ENCODE measurements at regions of chr14 and their contacts with region 1.

Region 1: DNA sequence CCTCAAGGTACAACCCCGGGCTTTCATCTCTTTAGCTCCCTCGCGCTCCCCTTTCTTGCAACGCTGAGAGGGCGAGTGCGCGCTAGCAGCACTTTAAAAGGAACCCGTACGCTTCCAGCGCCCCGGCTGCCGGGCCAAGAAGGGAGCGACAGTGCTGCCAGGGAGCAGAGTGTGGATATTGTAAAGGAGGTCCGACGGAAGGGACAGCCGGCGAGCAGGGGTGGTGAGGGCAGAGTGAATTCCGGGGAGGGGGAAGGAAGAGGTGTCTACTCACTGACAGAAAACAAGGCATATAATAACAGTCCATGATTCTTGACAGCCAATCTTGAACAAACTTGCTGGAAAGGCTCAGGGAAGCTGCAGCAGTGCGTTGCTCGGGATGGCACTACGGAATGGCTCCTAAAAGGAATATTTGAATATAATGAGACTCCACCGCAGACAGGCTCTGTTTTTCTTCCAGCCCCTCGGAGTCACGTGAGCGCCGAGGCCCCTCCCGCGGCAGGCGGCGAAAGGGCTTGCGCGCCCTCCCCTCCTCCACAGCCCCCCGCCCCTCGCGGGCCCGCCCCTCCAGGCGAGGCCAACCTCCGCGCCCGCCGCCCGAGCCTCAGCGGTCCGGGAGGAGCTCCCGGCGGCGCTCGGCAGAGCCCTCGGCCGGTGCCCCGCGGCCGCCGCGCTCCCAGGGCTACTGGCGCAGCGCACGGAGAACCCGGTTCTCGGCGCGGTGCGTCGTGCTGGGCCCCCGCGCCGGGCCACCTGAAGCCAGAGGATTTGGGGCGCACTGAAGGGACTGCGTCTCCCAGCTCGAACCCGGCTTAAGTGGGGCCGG is 3.4 kb downstream of the BMP4 start:
- DNase-seq: peak in 1 of 2 donors; percentile 90
- H3K4me3 ChIP-seq: peak overlapping the region; percentile 65 to 72
- H3K27ac ChIP-seq: peak overlapping the region; percentile 82 to 85
- H3K4me1 ChIP-seq: peaks cover 0 to 9% of the 10 kb centered on the region in 2 donors
- H3K27me3 ChIP-seq: no peaks in the 10 kb centered on the region
- CTCF ChIP-seq: no peak

Region 2: DNA sequence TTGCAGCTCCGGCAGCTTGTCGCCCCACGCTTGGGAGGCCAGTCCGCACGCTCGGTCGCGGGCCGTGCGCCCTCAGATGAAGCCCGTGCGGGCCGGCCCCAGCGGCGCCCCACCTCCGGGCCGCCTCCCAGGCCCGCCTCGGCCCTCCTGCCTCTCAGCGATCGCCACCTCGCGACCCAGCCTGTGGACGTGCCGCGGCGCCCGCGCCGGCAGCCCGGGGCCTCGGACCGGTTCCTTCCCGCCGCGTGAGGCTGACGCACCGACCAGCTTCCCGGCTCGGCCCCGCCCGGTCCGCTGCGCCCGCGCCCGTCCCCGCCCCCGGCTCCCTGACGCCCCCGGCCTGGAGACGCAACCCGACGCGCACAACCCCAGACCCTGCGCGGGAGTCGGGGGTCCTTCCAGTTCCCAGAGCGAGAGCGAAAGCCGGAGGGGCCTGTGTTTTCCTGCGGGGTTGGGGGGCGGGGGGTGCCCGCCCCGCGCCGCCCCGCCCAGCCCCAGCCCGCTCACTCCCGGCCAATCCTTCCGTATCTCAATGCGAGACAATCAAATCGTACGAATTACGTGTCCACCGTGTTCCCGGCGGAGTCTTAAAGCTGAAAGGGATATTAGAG is 1257.6 kb before region 1 on chr14 and contains the start of gene ERO1A:
- intact Hi-C with region 1: loop called (anchors 10 kb)
- DNase-seq: peak; percentile 44 to 91
- H3K4me3 ChIP-seq: peak within 1 kb of the TSS; percentile 96 to 98
- H3K27ac ChIP-seq: peak within 1 kb of the TSS; percentile 97 to 99
- H3K4me1 ChIP-seq: peaks cover 3 to 4% of the 10 kb centered on the region in 2 donors
- H3K27me3 ChIP-seq: no peaks in the 10 kb centered on the region
- CTCF ChIP-seq: no peak
- total RNA-seq, gene ERO1A: 25.9 TPM

Region 3: GRCh38 chr14:52950898-52951689 is 1002.1 kb before region 1 on chr14 and contains the start of gene FERMT2:
- intact Hi-C with region 1: loop called (anchors 10 kb)
- DNase-seq: peak; percentile 36 to 92
- H3K4me3 ChIP-seq: peak within 1 kb of the TSS; percentile 87 to 100
- H3K27ac ChIP-seq: peak within 1 kb of the TSS; percentile 98
- H3K4me1 ChIP-seq: peaks cover 5 to 31% of the 10 kb centered on the region in 2 donors
- H3K27me3 ChIP-seq: no peaks in the 10 kb centered on the region
- CTCF ChIP-seq: peak in 1 of 3 experiments; percentile 26
- total RNA-seq, gene FERMT2: 101 TPM

Region 4: DNA sequence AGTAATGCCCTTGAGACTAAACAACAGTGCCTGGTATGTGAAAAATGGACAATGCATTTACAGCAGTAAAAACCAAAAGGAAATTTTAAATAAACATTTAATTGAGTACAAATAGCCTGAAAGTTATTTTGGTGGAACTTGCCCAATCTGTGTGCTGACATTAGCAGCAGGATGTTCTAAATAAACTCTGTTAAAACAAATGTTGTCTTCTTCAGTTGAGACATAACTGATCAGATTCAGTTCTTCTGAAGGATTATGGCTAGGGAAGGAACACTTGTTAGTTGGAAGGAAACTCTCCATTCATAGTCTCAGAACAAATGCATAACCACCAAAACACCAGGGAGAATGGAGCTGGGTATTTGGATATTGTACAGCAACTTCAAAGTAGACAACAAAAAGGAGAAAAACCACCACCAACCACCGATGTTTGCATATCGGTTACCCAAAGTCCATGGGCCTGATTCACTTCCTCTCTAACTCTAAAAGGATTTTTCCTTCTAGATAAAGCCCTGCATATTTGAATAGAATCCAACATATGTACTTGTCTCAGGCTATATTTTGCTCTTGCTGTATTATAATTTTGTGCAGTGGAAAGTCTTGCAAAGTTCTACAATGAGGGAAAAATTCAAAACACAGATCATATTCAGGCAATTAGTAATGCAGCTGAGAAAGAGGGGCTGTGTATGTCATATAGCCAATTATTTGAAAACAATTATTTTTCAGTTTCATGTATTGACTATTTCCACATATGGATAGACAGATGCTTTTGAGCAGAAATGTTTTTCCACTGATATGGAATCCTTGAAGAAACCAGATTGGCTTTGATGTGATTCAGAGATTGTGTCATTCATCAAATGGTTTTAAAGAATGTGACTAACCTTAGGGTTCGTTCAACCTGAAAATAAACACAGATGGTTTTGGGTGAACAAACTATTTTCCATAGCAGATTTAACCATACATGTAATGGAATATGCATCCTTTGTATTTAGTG is 155.6 kb after region 1 on chr14:
- intact Hi-C with region 1: loop called (anchors 5 kb)
- DNase-seq: no peak
- H3K4me3 ChIP-seq: no peak overlapping the region
- H3K27ac ChIP-seq: peak overlapping the region; percentile 39 to 68
- H3K4me1 ChIP-seq: peaks cover 8 to 27% of the 10 kb centered on the region in 2 donors
- H3K27me3 ChIP-seq: no peaks in the 10 kb centered on the region
- CTCF ChIP-seq: no peak

Region 5: DNA sequence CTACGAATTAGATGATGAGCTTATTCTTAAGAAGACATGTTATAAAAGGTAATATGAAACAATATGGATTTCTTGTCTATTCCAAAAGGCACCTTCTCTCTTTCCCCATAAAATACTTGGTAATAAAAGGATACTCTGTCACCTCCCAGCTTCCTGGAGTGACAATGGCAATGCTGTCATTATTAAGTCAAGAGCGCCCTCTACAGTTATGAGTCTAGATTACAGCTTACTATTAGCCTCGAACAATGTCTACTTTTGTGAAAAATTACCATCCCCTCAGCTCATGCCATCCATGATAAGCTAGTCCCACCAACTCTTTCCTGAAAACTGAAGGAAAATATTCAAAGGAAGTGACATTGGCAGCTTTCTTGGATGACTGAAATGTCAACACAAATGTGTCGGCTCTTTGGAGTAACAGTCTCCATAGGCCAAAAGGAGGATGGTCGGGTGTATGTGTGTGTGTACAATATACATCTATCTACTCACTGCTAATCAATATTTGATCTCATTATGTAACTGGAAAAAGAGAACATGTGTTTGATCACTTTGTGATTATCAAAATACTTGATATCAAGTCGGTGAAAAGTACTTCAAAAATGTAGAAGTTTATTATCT is 394.9 kb after region 1 on chr14:
- intact Hi-C with region 1: loop called (anchors 5 kb)
- DNase-seq: no peak
- H3K4me3 ChIP-seq: no peak overlapping the region
- H3K27ac ChIP-seq: no peak overlapping the region
- H3K4me1 ChIP-seq: no peaks in the 10 kb centered on the region
- H3K27me3 ChIP-seq: no peaks in the 10 kb centered on the region
- CTCF ChIP-seq: peak; percentile 44 to 75 (median 66)

Region 6: GRCh38 chr14:54440873-54441868 is 488.0 kb after region 1 on chr14 and contains the start of gene CNIH1:
- intact Hi-C with region 1: loop called (anchors 2 kb)
- DNase-seq: peak; percentile 44 to 94
- H3K4me3 ChIP-seq: peak within 1 kb of the TSS; percentile 66 to 82
- H3K27ac ChIP-seq: peak within 1 kb of the TSS; percentile 82 to 94
- H3K4me1 ChIP-seq: peaks cover 0 to 5% of the 10 kb centered on the region in 2 donors
- H3K27me3 ChIP-seq: no peaks in the 10 kb centered on the region
- CTCF ChIP-seq: peak; percentile 89 to 97 (median 95)
- total RNA-seq, gene CNIH1: 173 TPM

Region 7: GRCh38 chr14:55389330-55389729 is 1436.1 kb after region 1 on chr14:
- intact Hi-C with region 1: loop called (anchors 10 kb)
- DNase-seq: no peak
- H3K4me3 ChIP-seq: no peak overlapping the region
- H3K27ac ChIP-seq: peak overlapping the region in 1 of 2 donors; percentile 10
- H3K4me1 ChIP-seq: peaks cover 4% of the 10 kb centered on the region in 2 donors
- H3K27me3 ChIP-seq: no peaks in the 10 kb centered on the region
- CTCF ChIP-seq: no peak

Measured in ascending aorta (tissue), 2 donors.